ENCODE measurements at regions of chr9 and their contacts with region 1.

Region 1: GRCh38 chr9:136790927-136791641 is at the start of gene TMEM141:
- DNase-seq: peak; percentile 97
- ATAC-seq: peak; percentile 84
- H3K4me3 ChIP-seq: peak within 1 kb of the TSS; percentile 78 to 98 (median 82)
- H3K27ac ChIP-seq: peak within 1 kb of the TSS; percentile 91
- H3K4me1 ChIP-seq: peaks cover 82% of the 10 kb centered on the region
- H3K27me3 ChIP-seq: no peaks in the 10 kb centered on the region; a peak in 1 of 5 replicates
- CTCF ChIP-seq: no peak
- EP300 ChIP-seq: no peak
- POLR2A ChIP-seq: peak in 1 of 2 experiments; percentile 5; a peak in 1 of 4 replicates
- RAD21 ChIP-seq: no peak
- total RNA-seq, gene TMEM141: 81.0 and 84.7 TPM in 2 replicates

Region 2: DNA sequence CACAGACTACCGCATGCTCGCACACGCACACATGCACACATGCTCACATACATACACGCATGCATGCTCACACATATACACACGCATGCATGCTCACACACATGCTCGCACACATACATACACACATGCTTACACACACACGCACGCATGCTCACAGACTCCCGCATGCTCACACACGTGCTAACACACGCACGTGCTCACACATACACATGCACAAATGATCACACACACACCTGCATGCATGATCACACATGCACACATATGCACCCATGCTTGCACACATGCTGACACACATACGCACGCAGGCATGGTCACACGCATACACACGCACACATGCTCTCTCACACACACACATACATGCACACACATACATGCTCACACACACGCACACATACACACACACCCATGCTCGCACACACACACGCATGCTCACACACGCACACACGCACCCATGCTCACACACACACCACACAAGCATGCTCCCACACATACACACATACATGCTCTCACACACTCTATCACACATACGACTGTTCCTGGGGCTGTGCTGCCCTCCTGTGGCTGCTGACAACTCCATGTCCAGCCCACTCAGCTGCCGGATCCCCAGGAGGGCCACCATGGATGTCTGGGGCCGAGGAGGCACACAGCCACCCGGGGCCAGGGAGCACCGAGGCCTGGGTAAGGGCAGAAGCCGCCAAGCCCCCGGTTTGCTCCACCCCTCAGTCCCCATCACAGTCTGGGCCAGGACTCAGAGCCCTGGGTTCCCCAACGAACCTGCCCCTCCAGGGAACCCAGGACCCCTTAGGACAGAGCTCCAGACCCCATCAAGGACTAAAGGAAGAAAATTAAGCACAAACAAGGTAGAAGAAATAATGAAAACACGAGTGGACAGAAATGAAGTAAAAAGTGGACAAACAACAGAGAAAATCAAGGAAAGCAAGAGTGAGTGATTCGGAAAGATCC is 159.8 kb before region 1 on chr9:
- CTCF ChIA-PET with region 1: no interaction called
- POLR2A ChIA-PET with region 1: no interaction called
- in situ Hi-C with region 1: no loop called
- intact Hi-C with region 1: no loop called
- DNase-seq: peak; percentile 65
- ATAC-seq: peak; percentile 73
- H3K4me3 ChIP-seq: no peak overlapping the region
- H3K27ac ChIP-seq: no peak overlapping the region
- H3K4me1 ChIP-seq: peaks cover 13% of the 10 kb centered on the region
- H3K27me3 ChIP-seq: peaks cover 12 to 54% of the 10 kb centered on the region in 2 experiments; a peak in 4 of 5 replicates
- CTCF ChIP-seq: peak; percentile 99
- EP300 ChIP-seq: no peak
- POLR2A ChIP-seq: no peak
- RAD21 ChIP-seq: peak; percentile 94

Region 3: GRCh38 chr9:136807281-136808074 is 16.4 kb after region 1 on chr9 and contains the start of gene RABL6:
- CTCF ChIA-PET with region 1: interaction called, 4 read pairs
- POLR2A ChIA-PET with region 1: interaction called, 14 read pairs
- in situ Hi-C with region 1: no loop called
- intact Hi-C with region 1: no loop called
- DNase-seq: peak; percentile 40
- ATAC-seq: peak; percentile 58
- H3K4me3 ChIP-seq: peak within 1 kb of the TSS; percentile 88 to 96 (median 92)
- H3K27ac ChIP-seq: peak within 1 kb of the TSS; percentile 76
- H3K4me1 ChIP-seq: peaks cover 68% of the 10 kb centered on the region
- H3K27me3 ChIP-seq: no peaks in the 10 kb centered on the region
- CTCF ChIP-seq: no peak
- EP300 ChIP-seq: no peak
- POLR2A ChIP-seq: 0 out of 4 replicates have a peak, but pooled peaks of 1 of the 2 experiments have one; percentile 23
- RAD21 ChIP-seq: no peak
- total RNA-seq, gene RABL6: 66.4 and 81.5 TPM in 2 replicates

Region 4: GRCh38 chr9:136849038-136849959 is 58.2 kb after region 1 on chr9 and contains the start of gene PHPT1:
- CTCF ChIA-PET with region 1: no interaction called
- POLR2A ChIA-PET with region 1: interaction called, 8 read pairs
- in situ Hi-C with region 1: no loop called
- intact Hi-C with region 1: loop called (anchors 5 kb)
- DNase-seq: peak; percentile 97
- ATAC-seq: peak; percentile 73
- H3K4me3 ChIP-seq: peak within 1 kb of the TSS; percentile 88 to 98 (median 91)
- H3K27ac ChIP-seq: peak within 1 kb of the TSS; percentile 91
- H3K4me1 ChIP-seq: peaks cover 25% of the 10 kb centered on the region
- H3K27me3 ChIP-seq: no peaks in the 10 kb centered on the region; a peak in 1 of 5 replicates
- CTCF ChIP-seq: no peak
- EP300 ChIP-seq: no peak
- POLR2A ChIP-seq: peak in 1 of 2 experiments; percentile 95; a peak in 2 of 4 replicates
- RAD21 ChIP-seq: peak; percentile 13; the same call in 1 of the 2 replicates
- total RNA-seq, gene PHPT1: 155 and 192 TPM in 2 replicates

Region 5: GRCh38 chr9:136928591-136928990 is 137.5 kb after region 1 on chr9:
- CTCF ChIA-PET with region 1: no interaction called
- POLR2A ChIA-PET with region 1: no interaction called
- in situ Hi-C with region 1: no loop called
- intact Hi-C with region 1: loop called (anchors 5 kb)
- DNase-seq: no peak
- ATAC-seq: no peak
- H3K4me3 ChIP-seq: no peak overlapping the region
- H3K27ac ChIP-seq: no peak overlapping the region
- H3K4me1 ChIP-seq: peaks cover 7% of the 10 kb centered on the region
- H3K27me3 ChIP-seq: no peaks in the 10 kb centered on the region
- CTCF ChIP-seq: no peak
- EP300 ChIP-seq: no peak
- POLR2A ChIP-seq: no peak
- RAD21 ChIP-seq: no peak

Measured in HepG2 (cell line).